BJ (cell line): ENCODE measurements at regions of chr13 and their contacts with region 1.

Region 1: GRCh38 chr13:31236211-31236786 is 36.5 kb downstream of the B3GLCT start:
- DNase-seq: no peak
- H3K4me3 ChIP-seq: no peak overlapping the region
- H3K27me3 ChIP-seq: no peaks in the 10 kb centered on the region
- CTCF ChIP-seq: peak; percentile 73

Region 2: GRCh38 chr13:31248965-31249539 is 12.8 kb after region 1 on chr13:
- CTCF ChIA-PET with region 1: interaction called, 40 read pairs
- POLR2A ChIA-PET with region 1: no interaction called
- DNase-seq: no peak
- H3K4me3 ChIP-seq: no peak overlapping the region
- H3K27me3 ChIP-seq: no peaks in the 10 kb centered on the region
- CTCF ChIP-seq: no peak

Region 3: DNA sequence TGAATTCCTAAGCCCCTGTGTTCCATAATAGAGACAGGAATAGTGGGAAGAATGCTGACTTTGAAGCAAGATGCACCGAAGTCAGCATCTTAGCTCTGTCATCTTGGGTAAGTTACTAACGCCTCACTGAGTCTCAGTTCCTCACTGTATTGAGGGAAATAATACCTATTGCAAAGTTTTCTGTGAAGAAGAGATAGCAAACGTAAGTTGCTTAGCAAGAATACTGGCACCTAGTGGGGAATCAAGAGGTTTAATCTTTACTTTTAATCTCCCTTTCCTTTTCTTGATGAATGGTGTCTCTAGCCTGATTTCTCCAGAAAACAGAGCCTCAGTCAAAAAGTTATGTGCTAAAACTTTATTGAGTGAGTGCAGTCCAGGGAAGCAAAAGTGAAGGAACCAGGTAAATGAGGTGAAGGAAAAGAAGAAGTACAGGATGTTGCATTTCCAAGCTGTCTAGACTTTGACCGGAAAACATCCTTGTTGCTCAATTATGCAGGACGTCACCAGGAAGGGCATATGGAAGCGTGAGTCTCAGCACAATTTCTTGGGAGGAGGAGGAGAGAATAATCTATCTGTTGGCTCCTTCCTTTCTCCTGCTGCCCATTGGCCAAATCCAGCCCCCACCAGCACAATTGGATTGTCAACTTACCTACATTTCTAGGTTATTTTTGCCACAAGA is 173.5 kb after region 1 on chr13:
- CTCF ChIA-PET with region 1: interaction called, 29 read pairs
- POLR2A ChIA-PET with region 1: no interaction called
- DNase-seq: no peak
- H3K4me3 ChIP-seq: no peak overlapping the region
- H3K27me3 ChIP-seq: peaks cover 4% of the 10 kb centered on the region; the same call in 1 of the 2 replicates
- CTCF ChIP-seq: peak; percentile 16; the same call in 1 of the 2 replicates